HEK293T (cell line): ENCODE measurements at regions of chr4 and their contacts with region 1.

Region 1: GRCh38 chr4:178665916-178666315 is 1223.7 kb upstream of the AGA start:
- DNase-seq: no peak

Region 2: GRCh38 chr4:178448372-178449035 is 217.4 kb before region 1 on chr4:
- CTCF ChIA-PET with region 1: no interaction called
- POLR2A ChIA-PET with region 1: no interaction called
- DNase-seq: no peak

Region 3: GRCh38 chr4:179441596-179441995 is 775.7 kb after region 1 on chr4:
- CTCF ChIA-PET with region 1: interaction called, 11 read pairs
- POLR2A ChIA-PET with region 1: no interaction called
- DNase-seq: no peak